BJ (cell line): ENCODE measurements at regions of chr4 and their contacts with region 1.

Region 1: GRCh38 chr4:8495851-8496202 is 55.2 kb downstream of the TRMT44 start:
- DNase-seq: no peak
- H3K4me3 ChIP-seq: no peak overlapping the region
- H3K27me3 ChIP-seq: 0 out of 2 replicates have a peak, but pooled peaks cover 1% of the 10 kb centered on the region
- CTCF ChIP-seq: no peak

Region 2: GRCh38 chr4:7795983-7796382 is 699.8 kb before region 1 on chr4:
- CTCF ChIA-PET with region 1: no interaction called
- POLR2A ChIA-PET with region 1: interaction called, 10 read pairs
- DNase-seq: no peak
- H3K4me3 ChIP-seq: no peak overlapping the region
- H3K27me3 ChIP-seq: no peaks in the 10 kb centered on the region
- CTCF ChIP-seq: no peak

Region 3: DNA sequence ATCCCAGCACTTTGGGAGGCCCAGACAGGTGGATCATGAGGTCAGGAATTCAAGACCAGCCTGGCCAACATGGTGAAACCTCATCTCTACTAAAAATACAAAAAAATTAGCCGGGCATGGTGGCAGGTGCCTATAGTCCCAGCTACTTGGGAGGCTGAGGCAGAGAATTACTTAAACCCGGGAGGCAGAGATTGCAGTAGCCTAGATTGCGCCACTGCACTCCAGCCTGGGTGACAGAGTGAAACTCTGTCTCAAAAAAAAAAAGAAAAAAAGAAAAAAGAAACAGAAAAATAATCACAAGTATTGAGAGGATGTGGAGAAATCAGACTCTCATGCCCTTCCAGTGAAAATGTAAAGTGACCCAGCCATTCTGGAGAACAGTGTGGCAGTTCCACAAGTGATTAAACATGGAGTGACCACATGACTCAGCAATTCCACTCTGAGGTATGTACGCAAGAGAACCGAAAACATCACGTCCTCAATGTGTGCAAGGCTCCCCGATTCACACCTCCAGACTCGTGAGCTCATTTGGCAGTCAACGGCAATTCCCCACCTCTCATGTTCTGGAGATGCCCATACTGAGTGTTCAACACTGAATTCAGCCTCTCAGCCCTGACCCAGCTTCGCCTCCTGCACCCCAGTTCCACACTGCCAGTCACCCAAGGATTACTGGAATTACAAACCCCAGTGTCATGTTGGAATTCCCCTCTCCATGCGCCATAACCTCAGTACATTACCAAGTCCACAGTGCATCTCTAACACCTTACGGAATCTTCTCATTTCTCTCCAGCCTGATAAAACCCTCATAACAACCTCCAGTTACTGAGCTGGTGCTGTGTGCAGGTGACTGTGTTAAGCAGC is 76.4 kb before region 1 on chr4:
- CTCF ChIA-PET with region 1: no interaction called
- POLR2A ChIA-PET with region 1: no interaction called
- DNase-seq: no peak
- H3K4me3 ChIP-seq: no peak overlapping the region
- H3K27me3 ChIP-seq: no peaks in the 10 kb centered on the region
- CTCF ChIP-seq: no peak